A549 (cell line): ENCODE measurements at regions of chr19 and their contacts with region 1.

Region 1: GRCh38 chr19:51338563-51339312 is 3.2 kb downstream of the VSIG10L start:
- DNase-seq: peak; percentile 88 to 91
- ATAC-seq: peak; percentile 79 to 88
- H3K4me3 ChIP-seq: peak overlapping the region; percentile 64
- H3K27ac ChIP-seq: peak overlapping the region; percentile 84 to 90
- H3K4me1 ChIP-seq: peaks cover 32% of the 10 kb centered on the region
- CTCF ChIP-seq: peak; percentile 97
- EP300 ChIP-seq: no peak
- POLR2A ChIP-seq: peak; percentile 25; the same call in 1 of the 2 replicates
- RAD21 ChIP-seq: peak; percentile 80 to 95

Region 2: GRCh38 chr19:51079481-51080110 is 259.1 kb before region 1 on chr19:
- CTCF ChIA-PET with region 1: no interaction called
- POLR2A ChIA-PET with region 1: no interaction called
- DNase-seq: no peak
- ATAC-seq: no peak
- H3K4me3 ChIP-seq: no peak overlapping the region
- H3K27ac ChIP-seq: no peak overlapping the region
- H3K4me1 ChIP-seq: no peaks in the 10 kb centered on the region
- CTCF ChIP-seq: no peak
- EP300 ChIP-seq: no peak
- POLR2A ChIP-seq: no peak
- RAD21 ChIP-seq: no peak

Region 3: GRCh38 chr19:51352783-51353360 is 14.1 kb after region 1 on chr19:
- CTCF ChIA-PET with region 1: interaction called, 19 read pairs
- POLR2A ChIA-PET with region 1: interaction called, 42 read pairs
- DNase-seq: no peak
- ATAC-seq: no peak
- H3K4me3 ChIP-seq: no peak overlapping the region
- H3K27ac ChIP-seq: peak overlapping the region in 1 of 2 experiments; percentile 83; a peak in 3 of 6 replicates
- H3K4me1 ChIP-seq: peaks cover 32% of the 10 kb centered on the region
- CTCF ChIP-seq: no peak
- EP300 ChIP-seq: no peak
- POLR2A ChIP-seq: no peak
- RAD21 ChIP-seq: no peak

Region 4: GRCh38 chr19:51359294-51359693 is 20.6 kb after region 1 on chr19:
- CTCF ChIA-PET with region 1: interaction called, 46 read pairs
- POLR2A ChIA-PET with region 1: interaction called, 52 read pairs
- DNase-seq: peak in 1 of 2 experiments; percentile 76
- ATAC-seq: peak; percentile 28 to 40; a peak in 4 of 6 replicates
- H3K4me3 ChIP-seq: no peak overlapping the region
- H3K27ac ChIP-seq: peak overlapping the region; percentile 79 to 96
- H3K4me1 ChIP-seq: peaks cover 67% of the 10 kb centered on the region
- CTCF ChIP-seq: no peak
- EP300 ChIP-seq: no peak
- POLR2A ChIP-seq: no peak
- RAD21 ChIP-seq: no peak

Region 5: GRCh38 chr19:51367565-51368365 is 29.0 kb after region 1 on chr19:
- CTCF ChIA-PET with region 1: interaction called, 46 read pairs
- POLR2A ChIA-PET with region 1: interaction called, 59 read pairs
- DNase-seq: peak; percentile 93 to 99
- ATAC-seq: peak; percentile 57 to 82
- H3K4me3 ChIP-seq: peak overlapping the region; percentile 61
- H3K27ac ChIP-seq: peak overlapping the region; percentile 96 to 97
- H3K4me1 ChIP-seq: peaks cover 33% of the 10 kb centered on the region
- CTCF ChIP-seq: no peak
- EP300 ChIP-seq: no peak
- POLR2A ChIP-seq: peak; percentile 92
- RAD21 ChIP-seq: peak in 1 of 2 experiments; percentile 18; a peak in 1 of 5 replicates